CD4-positive, alpha-beta T cell (primary cell): ENCODE measurements at regions of chr14 and their contacts with region 1.

Region 1: GRCh38 chr14:37230551-37231194 is 32.9 kb downstream of the MIPOL1 start:
- DNase-seq: peak in 3 of 14 experiments; percentile 43 to 47 (median 44)
- ATAC-seq: no peak
- H3K4me3 ChIP-seq: no peak overlapping the region
- H3K4me3 Mint-ChIP-seq: no peak overlapping the region
- H3K27ac ChIP-seq: no peak overlapping the region
- H3K27ac Mint-ChIP-seq: no peak overlapping the region
- H3K4me1 ChIP-seq: no peaks in the 10 kb centered on the region
- H3K4me1 Mint-ChIP-seq: no peaks in the 10 kb centered on the region
- H3K27me3 ChIP-seq: no peaks in the 10 kb centered on the region
- H3K27me3 Mint-ChIP-seq: no peaks in the 10 kb centered on the region
- CTCF ChIP-seq: peak; percentile 44

Region 2: DNA sequence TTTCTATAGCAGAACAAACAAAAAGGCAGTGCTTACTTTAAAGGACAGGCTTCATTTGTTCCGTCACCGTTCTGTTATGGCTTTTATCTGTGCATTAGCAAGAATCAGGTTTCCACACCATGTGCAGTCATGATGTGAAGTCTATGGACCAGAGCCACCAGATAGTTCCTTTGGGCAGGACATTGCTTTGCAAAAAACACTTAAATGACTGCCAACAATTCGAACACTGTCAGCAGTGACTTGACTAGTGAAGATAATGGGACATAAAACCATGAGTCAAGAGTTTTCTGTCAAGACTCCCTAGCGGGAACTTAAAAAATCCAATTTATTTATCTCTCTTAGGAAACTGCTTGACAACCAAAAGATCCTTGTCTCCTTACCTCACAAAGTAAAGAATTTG is 790.9 kb before region 1 on chr14:
- CTCF ChIA-PET with region 1: no interaction called
- POLR2A ChIA-PET with region 1: no interaction called
- intact Hi-C with region 1: no loop called
- DNase-seq: no peak
- ATAC-seq: no peak
- H3K4me3 ChIP-seq: no peak overlapping the region
- H3K4me3 Mint-ChIP-seq: no peak overlapping the region
- H3K27ac ChIP-seq: no peak overlapping the region
- H3K27ac Mint-ChIP-seq: no peak overlapping the region
- H3K4me1 ChIP-seq: no peaks in the 10 kb centered on the region
- H3K4me1 Mint-ChIP-seq: no peaks in the 10 kb centered on the region
- H3K27me3 ChIP-seq: peaks cover 0 to 8% of the 10 kb centered on the region in 2 experiments
- H3K27me3 Mint-ChIP-seq: peaks cover 40% of the 10 kb centered on the region
- CTCF ChIP-seq: no peak

Region 3: DNA sequence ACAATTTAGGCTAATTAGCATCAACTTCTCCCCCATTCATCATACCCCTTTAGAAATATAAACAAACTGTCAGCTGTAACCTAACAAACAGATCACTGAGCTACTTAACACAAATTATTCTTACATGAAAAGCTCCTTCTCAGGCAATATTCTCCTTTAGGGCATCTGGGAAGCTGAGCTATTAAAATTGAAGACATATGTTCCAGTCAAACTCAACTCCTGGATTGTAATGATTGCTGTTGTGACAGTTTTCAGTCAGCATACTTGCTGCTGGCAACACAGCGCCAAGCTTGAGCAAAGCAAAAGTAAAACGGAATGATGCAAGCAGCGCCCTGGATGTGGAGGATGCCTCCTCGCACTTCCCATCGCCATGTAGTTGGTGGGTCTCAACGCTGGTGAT is 140.6 kb before region 1 on chr14:
- CTCF ChIA-PET with region 1: no interaction called
- POLR2A ChIA-PET with region 1: no interaction called
- intact Hi-C with region 1: no loop called
- DNase-seq: no peak
- ATAC-seq: no peak
- H3K4me3 ChIP-seq: no peak overlapping the region
- H3K4me3 Mint-ChIP-seq: no peak overlapping the region
- H3K27ac ChIP-seq: no peak overlapping the region
- H3K27ac Mint-ChIP-seq: no peak overlapping the region
- H3K4me1 ChIP-seq: no peaks in the 10 kb centered on the region
- H3K4me1 Mint-ChIP-seq: no peaks in the 10 kb centered on the region
- H3K27me3 ChIP-seq: no peaks in the 10 kb centered on the region
- H3K27me3 Mint-ChIP-seq: no peaks in the 10 kb centered on the region
- CTCF ChIP-seq: no peak

Region 4: GRCh38 chr14:37874429-37875191 is 643.9 kb after region 1 on chr14:
- CTCF ChIA-PET with region 1: no interaction called
- POLR2A ChIA-PET with region 1: no interaction called
- intact Hi-C with region 1: loop called in 1 of 2 experiments (anchors 5 kb)
- DNase-seq: peak; percentile 44 to 83 (median 68)
- ATAC-seq: peak; percentile 77
- H3K4me3 ChIP-seq: no peak overlapping the region
- H3K4me3 Mint-ChIP-seq: no peak overlapping the region
- H3K27ac ChIP-seq: no peak overlapping the region
- H3K27ac Mint-ChIP-seq: no peak overlapping the region
- H3K4me1 ChIP-seq: peaks cover 7% of the 10 kb centered on the region
- H3K4me1 Mint-ChIP-seq: peaks cover 7% of the 10 kb centered on the region
- H3K27me3 ChIP-seq: peaks cover 0 to 2% of the 10 kb centered on the region in 2 experiments
- H3K27me3 Mint-ChIP-seq: no peaks in the 10 kb centered on the region
- CTCF ChIP-seq: peak; percentile 35